RWPE1 (cell line): ENCODE measurements at regions of chr3 and their contacts with region 1.

Region 1: GRCh38 chr3:195758721-195759353 is 38.1 kb downstream of the MUC20 start:
- DNase-seq: no peak
- H3K27ac ChIP-seq: no peak overlapping the region
- CTCF ChIP-seq: no peak

Region 2: DNA sequence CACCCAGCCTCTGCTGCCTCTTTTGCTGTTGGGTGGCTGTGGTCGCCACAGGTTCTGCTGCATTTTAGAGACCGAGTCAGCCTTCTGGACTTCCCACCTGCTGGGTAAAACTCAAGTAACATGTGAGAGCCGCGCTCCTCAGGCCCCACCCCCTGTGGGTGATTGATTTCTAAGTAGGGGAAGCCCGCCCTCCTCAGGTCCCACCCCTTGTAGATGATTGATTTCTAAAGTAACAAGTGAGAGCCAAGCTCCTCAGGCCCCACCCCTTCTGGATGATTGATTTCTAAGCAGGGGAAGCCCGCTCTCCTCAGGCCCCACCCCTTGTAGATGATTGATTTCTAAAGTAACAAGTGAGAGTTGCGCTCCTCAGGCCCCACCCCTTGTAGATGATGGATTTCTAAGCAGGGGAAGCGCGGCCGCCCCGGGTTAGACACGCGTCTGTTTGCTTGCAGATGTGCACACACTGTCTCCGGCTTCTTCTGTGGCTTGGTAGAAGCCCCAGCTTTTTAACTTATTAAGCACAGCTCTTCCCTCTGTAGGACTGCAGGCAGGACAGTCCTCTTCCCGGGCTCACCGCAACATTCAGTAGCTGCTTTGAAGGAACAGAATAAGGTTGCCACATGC is 989.7 kb before region 1 on chr3:
- CTCF ChIA-PET with region 1: no interaction called
- POLR2A ChIA-PET with region 1: no interaction called
- DNase-seq: peak; percentile 98
- H3K27ac ChIP-seq: no peak overlapping the region
- CTCF ChIP-seq: no peak

Region 3: GRCh38 chr3:195738274-195739044 is 20.4 kb before region 1 on chr3:
- CTCF ChIA-PET with region 1: no interaction called
- POLR2A ChIA-PET with region 1: no interaction called
- DNase-seq: no peak
- H3K27ac ChIP-seq: no peak overlapping the region
- CTCF ChIP-seq: no peak

Region 4: DNA sequence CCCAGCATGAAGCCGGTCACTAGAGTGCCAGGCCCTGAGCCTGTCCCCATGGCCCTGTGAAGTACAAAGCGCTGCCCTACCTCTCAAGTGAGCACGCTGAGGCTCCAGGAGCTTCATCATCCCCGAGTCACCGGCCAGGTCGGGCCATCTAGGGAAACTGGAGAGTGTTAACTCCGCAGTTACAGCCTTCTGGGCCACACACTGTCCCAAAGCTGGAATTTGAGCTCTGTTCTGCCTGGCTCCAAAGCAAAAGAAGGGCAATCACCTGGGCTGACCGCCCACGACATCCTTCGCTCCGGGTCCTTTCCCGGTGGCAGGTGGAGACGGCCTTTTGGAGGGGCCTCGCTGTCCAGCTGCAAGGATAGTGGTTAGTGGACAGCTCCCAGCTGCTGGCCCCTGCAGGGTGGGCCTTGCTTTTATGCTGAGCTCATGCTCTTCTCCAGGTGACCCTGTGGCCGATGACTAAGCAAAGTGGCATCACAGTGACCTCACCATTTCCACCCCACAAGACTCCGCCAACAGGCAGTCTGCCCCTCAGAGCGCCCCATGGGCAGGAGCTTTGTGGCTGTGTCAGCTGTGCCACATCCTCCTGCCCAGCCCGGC is 56.4 kb after region 1 on chr3:
- CTCF ChIA-PET with region 1: no interaction called
- POLR2A ChIA-PET with region 1: interaction called, 10 read pairs
- DNase-seq: no peak
- H3K27ac ChIP-seq: no peak overlapping the region
- CTCF ChIP-seq: no peak